Adrenal gland (tissue), 19 donors: ENCODE measurements at regions of chr2 and their contacts with region 1.

Region 1: GRCh38 chr2:210259687-210260086 is 34.4 kb upstream of the ACADL start:
- DNase-seq: no peak
- H3K4me3 ChIP-seq: no peak overlapping the region
- H3K27ac ChIP-seq: no peak overlapping the region
- H3K4me1 ChIP-seq: no peaks in the 10 kb centered on the region
- H3K27me3 ChIP-seq: no peaks in the 10 kb centered on the region
- CTCF ChIP-seq: no peak
- POLR2A ChIP-seq: no peak

Region 2: GRCh38 chr2:209977386-209978239 is 282.1 kb before region 1 on chr2:
- intact Hi-C with region 1: no loop called
- DNase-seq: no peak
- H3K4me3 ChIP-seq: no peak overlapping the region
- H3K27ac ChIP-seq: no peak overlapping the region
- H3K4me1 ChIP-seq: no peaks in the 10 kb centered on the region
- H3K27me3 ChIP-seq: no peaks in the 10 kb centered on the region
- CTCF ChIP-seq: peak; percentile 26 to 84 (median 70)
- POLR2A ChIP-seq: no peak

Region 3: DNA sequence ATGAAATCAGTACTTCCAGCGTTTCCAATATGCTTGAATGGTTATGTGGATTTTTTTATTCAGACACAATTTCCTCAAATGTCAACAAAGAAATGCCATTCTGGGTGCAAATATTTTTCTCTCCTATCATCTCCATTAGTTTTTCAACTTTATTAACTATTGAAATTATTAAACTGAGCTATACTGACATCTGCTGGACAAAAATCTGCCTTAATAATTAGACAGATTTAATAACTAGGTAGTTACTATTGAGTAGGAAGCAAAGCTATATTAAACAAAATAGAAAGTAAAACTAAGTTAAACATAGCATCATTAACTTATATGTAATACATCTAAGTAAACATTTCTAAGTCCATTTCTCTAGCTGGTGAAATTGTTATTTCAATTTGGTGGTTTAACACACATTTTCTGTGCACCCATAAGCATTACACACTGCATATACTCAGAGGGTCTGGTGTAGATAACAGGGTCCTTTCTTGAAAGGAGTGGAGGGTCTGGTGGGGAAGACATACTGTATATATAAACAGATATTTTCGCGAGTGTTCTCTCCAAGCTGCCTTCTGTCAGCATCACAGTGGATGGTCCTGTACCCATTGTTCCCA is 139.9 kb after region 1 on chr2:
- intact Hi-C with region 1: loop called in 1 of 2 experiments (anchors 5 kb)
- DNase-seq: no peak
- H3K4me3 ChIP-seq: no peak overlapping the region
- H3K27ac ChIP-seq: no peak overlapping the region
- H3K4me1 ChIP-seq: no peaks in the 10 kb centered on the region
- H3K27me3 ChIP-seq: peaks cover 3% of the 10 kb centered on the region
- CTCF ChIP-seq: peak; percentile 13 to 50 (median 36)
- POLR2A ChIP-seq: no peak